ENCODE measurements at regions of chr9 and their contacts with region 1.

Region 1: GRCh38 chr9:70935856-70936255 is 185.6 kb downstream of the TRPM3 start:
- DNase-seq: no peak
- ATAC-seq: no peak
- H3K4me3 ChIP-seq: no peak overlapping the region
- H3K27ac ChIP-seq: no peak overlapping the region
- H3K4me1 ChIP-seq: no peaks in the 10 kb centered on the region
- H3K27me3 ChIP-seq: no peaks in the 10 kb centered on the region
- CTCF ChIP-seq: no peak

Region 2: GRCh38 chr9:70998962-70999361 is 63.1 kb after region 1 on chr9:
- CTCF ChIA-PET with region 1: no interaction called
- POLR2A ChIA-PET with region 1: no interaction called
- in situ Hi-C with region 1: no loop called
- intact Hi-C with region 1: loop called (anchors 10 kb)
- DNase-seq: no peak
- ATAC-seq: no peak
- H3K4me3 ChIP-seq: no peak overlapping the region
- H3K27ac ChIP-seq: no peak overlapping the region
- H3K4me1 ChIP-seq: no peaks in the 10 kb centered on the region
- H3K27me3 ChIP-seq: no peaks in the 10 kb centered on the region
- CTCF ChIP-seq: no peak